AG04450 (cell line): ENCODE measurements at regions of chr6 and their contacts with region 1.

Region 1: GRCh38 chr6:35297601-35298481 is at the start of gene DEF6:
- DNase-seq: peak; percentile 60
- H3K4me3 ChIP-seq: peak within 1 kb of the TSS; percentile 52
- H3K27ac ChIP-seq: no peak within 1 kb of the TSS
- H3K27me3 ChIP-seq: no peaks in the 10 kb centered on the region
- CTCF ChIP-seq: peak; percentile 72
- polyA plus RNA-seq, gene DEF6: 2.5 and 2.6 TPM in 2 replicates

Region 2: GRCh38 chr6:35327349-35328027 is 29.6 kb after region 1 on chr6:
- CTCF ChIA-PET with region 1: interaction called, 25 read pairs
- POLR2A ChIA-PET with region 1: no interaction called
- DNase-seq: peak; percentile 15
- H3K4me3 ChIP-seq: no peak overlapping the region
- H3K27ac ChIP-seq: no peak overlapping the region
- H3K27me3 ChIP-seq: peaks cover 5% of the 10 kb centered on the region
- CTCF ChIP-seq: peak; percentile 82